ENCODE measurements at regions of chr15 and their contacts with region 1.

Region 1: GRCh38 chr15:97909291-97909891 is 51.1 kb upstream of the ARRDC4 start:
- DNase-seq: peak; percentile 79
- ATAC-seq: peak; percentile 83
- H3K4me3 ChIP-seq: no peak overlapping the region
- H3K27ac ChIP-seq: no peak overlapping the region
- H3K4me1 ChIP-seq: no peaks in the 10 kb centered on the region
- H3K27me3 ChIP-seq: peaks cover 60% of the 10 kb centered on the region
- CTCF ChIP-seq: peak; percentile 84

Region 2: GRCh38 chr15:98085003-98085639 is 175.7 kb after region 1 on chr15:
- CTCF ChIA-PET with region 1: no interaction called
- POLR2A ChIA-PET with region 1: no interaction called
- intact Hi-C with region 1: loop called (anchors 1 kb)
- DNase-seq: peak; percentile 74
- ATAC-seq: no peak
- H3K4me3 ChIP-seq: no peak overlapping the region
- H3K27ac ChIP-seq: no peak overlapping the region
- H3K4me1 ChIP-seq: no peaks in the 10 kb centered on the region
- H3K27me3 ChIP-seq: peaks cover 11% of the 10 kb centered on the region
- CTCF ChIP-seq: peak; percentile 70

Region 3: DNA sequence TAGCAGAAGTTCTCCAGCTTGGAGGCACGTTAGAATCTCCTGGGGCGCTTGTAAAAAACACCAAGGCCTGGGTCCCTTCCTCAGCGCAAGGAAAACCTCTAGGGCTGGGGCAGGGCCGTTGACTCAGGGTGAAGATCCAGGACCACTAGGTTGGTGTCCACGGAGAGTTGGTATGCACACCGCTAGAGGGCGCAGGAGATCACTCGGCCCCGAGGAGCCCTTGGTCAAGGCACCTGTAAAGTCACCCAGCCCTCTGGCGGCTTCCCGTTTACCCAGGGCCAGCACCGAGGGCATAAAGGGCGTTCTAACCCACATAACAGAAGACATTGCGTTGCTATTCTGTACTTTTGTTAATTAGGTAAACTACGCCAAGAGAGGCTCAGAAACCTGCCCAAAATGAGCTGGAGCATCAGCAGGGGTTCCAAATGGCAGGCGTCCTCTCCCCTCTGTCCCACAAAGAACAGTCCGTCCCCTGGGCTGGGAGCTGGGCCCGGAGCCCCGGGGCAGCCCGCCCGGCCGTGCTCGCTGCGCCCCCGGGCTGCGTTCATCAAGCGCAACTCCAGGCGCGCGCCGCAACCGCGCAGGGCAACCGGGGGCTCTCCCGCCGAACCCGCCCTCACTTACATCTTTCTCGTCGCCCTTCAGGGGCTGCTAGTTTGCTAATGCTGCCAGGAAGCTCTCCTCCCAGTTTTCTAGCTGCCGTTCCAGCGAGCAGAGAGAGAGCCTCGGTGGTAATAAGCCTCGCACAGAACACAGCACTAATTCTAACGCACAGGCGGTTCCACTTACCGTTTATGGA is 383.2 kb after region 1 on chr15:
- CTCF ChIA-PET with region 1: no interaction called
- POLR2A ChIA-PET with region 1: no interaction called
- intact Hi-C with region 1: loop called (anchors 10 kb)
- DNase-seq: peak; percentile 38
- ATAC-seq: peak; percentile 51; the same call in 1 of the 2 replicates
- H3K4me3 ChIP-seq: no peak overlapping the region
- H3K27ac ChIP-seq: no peak overlapping the region
- H3K4me1 ChIP-seq: no peaks in the 10 kb centered on the region
- H3K27me3 ChIP-seq: peaks cover 61% of the 10 kb centered on the region
- CTCF ChIP-seq: peak; percentile 73

Region 4: GRCh38 chr15:98428253-98428989 is 519.0 kb after region 1 on chr15:
- CTCF ChIA-PET with region 1: no interaction called
- POLR2A ChIA-PET with region 1: no interaction called
- intact Hi-C with region 1: loop called (anchors 10 kb)
- DNase-seq: peak; percentile 72
- ATAC-seq: peak; percentile 90
- H3K4me3 ChIP-seq: peak overlapping the region; percentile 64
- H3K27ac ChIP-seq: no peak overlapping the region
- H3K4me1 ChIP-seq: no peaks in the 10 kb centered on the region
- H3K27me3 ChIP-seq: peaks cover 30% of the 10 kb centered on the region
- CTCF ChIP-seq: peak; percentile 59; the same call in 1 of the 2 replicates

Measured in PC-3 (cell line).